PC-3 (cell line): ENCODE measurements at regions of chr14 and their contacts with region 1.

Region 1: DNA sequence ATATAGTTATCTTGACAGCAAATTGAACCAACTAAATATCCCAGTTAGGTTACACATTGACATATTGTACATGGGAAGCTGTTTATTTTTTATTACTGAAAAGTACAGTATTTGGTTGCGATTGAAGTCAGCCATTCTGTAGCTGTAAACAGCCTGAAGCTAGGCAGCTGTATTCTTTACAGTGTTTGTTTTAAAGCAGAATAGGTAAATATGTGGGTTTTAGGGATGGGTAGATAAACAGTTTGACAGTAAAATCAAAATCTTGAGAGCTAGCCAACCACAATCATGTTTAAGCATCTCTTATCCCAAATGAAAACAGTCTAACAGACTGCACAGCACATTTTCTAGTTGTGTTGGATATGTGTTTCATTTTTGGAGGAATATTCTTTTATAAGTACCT is 45.7 kb downstream of the TTC6 start:
- DNase-seq: peak; percentile 71
- ATAC-seq: peak; percentile 97
- H3K4me3 ChIP-seq: no peak overlapping the region
- H3K27ac ChIP-seq: no peak overlapping the region
- H3K4me1 ChIP-seq: peaks cover 9% of the 10 kb centered on the region
- H3K27me3 ChIP-seq: no peaks in the 10 kb centered on the region
- CTCF ChIP-seq: no peak

Region 2: GRCh38 chr14:37594238-37594914 is 46.7 kb before region 1 on chr14:
- CTCF ChIA-PET with region 1: no interaction called
- POLR2A ChIA-PET with region 1: no interaction called
- intact Hi-C with region 1: loop called (anchors 1 kb)
- DNase-seq: peak; percentile 92
- ATAC-seq: no peak
- H3K4me3 ChIP-seq: peak overlapping the region; percentile 96
- H3K27ac ChIP-seq: peak overlapping the region; percentile 99
- H3K4me1 ChIP-seq: peaks cover 28% of the 10 kb centered on the region
- H3K27me3 ChIP-seq: no peaks in the 10 kb centered on the region
- CTCF ChIP-seq: peak; percentile 92

Region 3: DNA sequence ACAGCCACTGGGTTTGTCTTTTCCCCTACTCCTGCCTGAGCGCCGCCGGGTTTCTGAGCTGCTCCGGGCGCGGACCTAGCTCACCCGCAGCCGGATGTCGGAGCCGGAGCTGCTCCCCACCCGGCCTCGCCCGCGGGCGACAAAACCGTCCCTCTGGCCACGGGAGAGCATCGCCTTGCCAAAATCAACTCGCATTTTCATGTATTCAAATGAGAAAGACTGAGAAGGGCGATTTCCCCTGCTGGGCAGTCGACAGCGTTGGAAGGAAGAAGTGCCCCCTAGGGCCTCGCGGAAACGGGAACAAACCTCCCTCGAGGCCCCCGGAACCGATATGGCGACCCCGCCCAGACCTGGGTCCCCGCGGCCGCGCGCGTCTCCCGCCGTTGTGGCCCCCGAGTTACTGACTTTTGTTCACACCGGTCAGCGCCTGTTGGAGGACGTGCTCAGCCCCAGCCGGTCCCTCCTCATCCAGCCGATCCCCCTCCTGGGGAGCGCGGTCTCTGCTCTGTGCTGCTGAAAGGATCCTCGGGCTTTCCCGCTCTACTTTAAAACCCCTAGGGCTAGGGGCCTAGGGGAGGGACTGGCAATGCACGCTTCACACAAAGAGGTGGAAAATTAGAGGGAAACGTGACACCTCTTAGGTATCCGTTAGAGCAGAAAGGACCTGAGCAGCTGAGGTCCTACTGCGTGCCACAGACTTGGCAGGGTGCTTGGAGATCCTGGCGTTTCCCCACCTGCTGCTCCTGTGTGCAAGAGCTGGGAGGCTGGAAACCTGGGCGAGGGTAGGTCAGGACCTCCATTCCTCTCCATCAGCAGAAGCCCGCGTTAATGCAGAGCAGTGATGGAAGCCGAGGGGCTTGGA is 41.4 kb before region 1 on chr14:
- CTCF ChIA-PET with region 1: no interaction called
- POLR2A ChIA-PET with region 1: no interaction called
- intact Hi-C with region 1: loop called (anchors 1 kb)
- DNase-seq: peak; percentile 63
- ATAC-seq: peak; percentile 4
- H3K4me3 ChIP-seq: peak overlapping the region; percentile 93
- H3K27ac ChIP-seq: peak overlapping the region; percentile 99
- H3K4me1 ChIP-seq: peaks cover 47% of the 10 kb centered on the region
- H3K27me3 ChIP-seq: no peaks in the 10 kb centered on the region
- CTCF ChIP-seq: no peak; the same call in 1 of the 2 replicates

Region 4: DNA sequence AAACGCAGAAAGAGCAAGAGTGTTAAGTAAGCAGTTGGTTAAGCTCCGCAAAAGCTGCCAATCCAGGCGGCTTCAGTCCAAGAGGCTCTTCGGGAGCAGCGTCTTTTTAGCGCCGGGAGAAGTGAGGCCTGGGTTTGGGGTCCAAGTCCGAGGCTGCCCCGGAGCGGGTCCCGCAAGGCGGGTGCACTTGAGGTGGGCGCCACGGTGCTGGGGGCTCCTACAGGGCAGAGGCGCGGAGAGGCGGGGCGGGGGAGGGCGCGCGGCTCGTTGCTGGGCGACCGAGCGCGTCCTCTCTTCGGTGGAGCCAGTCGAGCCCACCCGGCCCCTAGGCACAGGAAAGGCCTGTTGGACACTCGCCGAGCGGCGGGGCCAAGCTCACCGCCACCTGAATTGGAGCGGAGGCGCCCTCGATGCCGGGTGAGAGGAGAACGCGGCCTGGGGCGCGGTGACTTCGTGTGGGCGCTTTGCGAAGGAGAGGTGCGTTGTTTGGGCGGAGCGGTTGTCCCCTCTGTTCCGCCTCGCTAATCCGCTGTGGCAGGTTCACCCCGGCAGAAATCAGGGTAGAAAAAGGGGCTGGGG is 30.1 kb before region 1 on chr14:
- CTCF ChIA-PET with region 1: no interaction called
- POLR2A ChIA-PET with region 1: no interaction called
- intact Hi-C with region 1: no loop called
- DNase-seq: no peak
- ATAC-seq: no peak
- H3K4me3 ChIP-seq: no peak overlapping the region
- H3K27ac ChIP-seq: no peak overlapping the region
- H3K4me1 ChIP-seq: no peaks in the 10 kb centered on the region
- H3K27me3 ChIP-seq: no peaks in the 10 kb centered on the region
- CTCF ChIP-seq: no peak

Region 5: GRCh38 chr14:37655418-37655817 is 14.3 kb after region 1 on chr14:
- CTCF ChIA-PET with region 1: interaction called, 3 read pairs
- POLR2A ChIA-PET with region 1: no interaction called
- intact Hi-C with region 1: loop called (anchors 2 kb)
- DNase-seq: peak; percentile 82
- ATAC-seq: peak; percentile 65
- H3K4me3 ChIP-seq: 0 out of 2 replicates have a peak overlapping the region, but pooled peaks have one; percentile 22
- H3K27ac ChIP-seq: peak overlapping the region; percentile 60
- H3K4me1 ChIP-seq: peaks cover 52% of the 10 kb centered on the region
- H3K27me3 ChIP-seq: no peaks in the 10 kb centered on the region
- CTCF ChIP-seq: no peak

Region 6: GRCh38 chr14:37678916-37679315 is 37.8 kb after region 1 on chr14:
- CTCF ChIA-PET with region 1: no interaction called
- POLR2A ChIA-PET with region 1: no interaction called
- intact Hi-C with region 1: no loop called
- DNase-seq: no peak
- ATAC-seq: no peak
- H3K4me3 ChIP-seq: no peak overlapping the region
- H3K27ac ChIP-seq: no peak overlapping the region
- H3K4me1 ChIP-seq: no peaks in the 10 kb centered on the region
- H3K27me3 ChIP-seq: no peaks in the 10 kb centered on the region
- CTCF ChIP-seq: no peak

Region 7: DNA sequence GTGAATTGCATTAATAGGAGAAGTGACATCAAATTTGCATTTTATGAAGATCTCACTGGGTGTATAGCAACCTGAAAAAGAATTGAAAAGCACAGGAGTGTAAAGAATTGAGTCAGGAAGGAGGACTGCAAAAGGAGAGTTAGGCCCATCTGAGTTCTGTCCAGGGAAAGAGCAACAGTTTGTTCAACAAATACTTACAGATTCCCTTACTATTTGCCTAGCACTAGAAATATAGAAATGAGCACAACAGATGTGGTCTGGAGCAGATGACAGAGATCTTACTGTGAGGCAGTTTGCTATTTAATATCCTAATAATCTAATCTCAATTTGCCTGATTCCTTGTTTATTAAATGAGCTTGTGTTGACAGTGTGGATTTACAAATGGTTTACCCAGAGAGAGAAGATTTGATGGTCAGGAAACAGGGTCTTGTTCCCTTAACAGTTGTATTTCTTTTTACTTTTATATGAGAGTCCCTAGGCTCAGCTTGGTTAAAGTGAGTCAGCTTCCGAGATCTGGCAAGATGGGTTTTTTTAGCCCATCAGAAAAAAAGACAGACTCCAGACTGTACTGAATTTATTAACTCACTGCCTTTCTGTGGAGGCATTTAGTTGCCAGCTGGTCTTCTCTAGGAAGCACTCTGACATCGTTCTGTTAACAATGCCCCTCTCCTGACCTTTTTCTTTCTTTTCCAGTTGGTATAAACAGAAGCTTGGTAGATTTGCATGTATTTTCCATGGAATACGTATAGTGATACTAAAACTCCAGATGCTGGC is 184.0 kb after region 1 on chr14:
- CTCF ChIA-PET with region 1: no interaction called
- POLR2A ChIA-PET with region 1: no interaction called
- intact Hi-C with region 1: loop called (anchors 5 kb)
- DNase-seq: peak; percentile 55
- ATAC-seq: peak; percentile 66
- H3K4me3 ChIP-seq: no peak overlapping the region
- H3K27ac ChIP-seq: peak overlapping the region; percentile 10
- H3K4me1 ChIP-seq: peaks cover 33% of the 10 kb centered on the region
- H3K27me3 ChIP-seq: no peaks in the 10 kb centered on the region
- CTCF ChIP-seq: no peak